ENCODE measurements at regions of chr4 and their contacts with region 1.

Region 1: GRCh38 chr4:76067652-76068286 is 6.7 kb upstream of the ART3 start:
- DNase-seq: peak; percentile 28 to 78 (median 64)
- ATAC-seq: peak; percentile 61
- H3K4me3 ChIP-seq: no peak overlapping the region
- H3K4me3 Mint-ChIP-seq: no peak overlapping the region
- H3K27ac ChIP-seq: no peak overlapping the region
- H3K27ac Mint-ChIP-seq: no peak overlapping the region
- H3K4me1 ChIP-seq: no peaks in the 10 kb centered on the region
- H3K4me1 Mint-ChIP-seq: no peaks in the 10 kb centered on the region
- H3K27me3 ChIP-seq: peaks cover 0 to 2% of the 10 kb centered on the region in 2 experiments
- H3K27me3 Mint-ChIP-seq: no peaks in the 10 kb centered on the region
- CTCF ChIP-seq: peak; percentile 74

Region 2: DNA sequence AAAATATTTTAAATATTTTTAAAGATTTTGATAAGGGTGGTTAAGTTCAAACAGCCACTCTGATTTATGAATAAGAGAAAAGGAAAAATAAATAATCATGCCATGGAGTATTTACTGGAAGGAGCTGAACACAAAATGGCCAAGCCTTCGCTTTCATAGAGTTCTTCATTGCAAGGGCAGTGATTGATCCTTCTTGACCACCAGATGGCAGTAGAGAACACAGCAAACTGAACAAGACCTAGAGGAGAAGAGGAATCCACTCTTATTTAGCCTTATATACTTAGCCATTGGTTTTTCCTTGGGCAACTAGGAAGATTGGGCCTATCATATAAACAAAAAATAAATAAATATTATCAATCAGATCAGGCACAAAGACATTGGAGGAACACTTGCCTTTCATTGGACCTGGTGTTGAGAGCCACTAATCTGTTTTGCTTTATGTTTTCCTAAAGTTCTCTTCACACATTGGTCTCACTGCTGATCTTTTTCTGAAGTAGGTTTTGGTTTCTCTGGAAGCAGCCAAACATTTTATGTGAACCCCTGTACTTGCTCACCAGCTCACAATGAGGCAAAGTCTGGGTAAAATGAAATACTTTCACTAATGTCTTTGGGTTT is 1192.9 kb before region 1 on chr4:
- CTCF ChIA-PET with region 1: no interaction called
- POLR2A ChIA-PET with region 1: no interaction called
- intact Hi-C with region 1: loop called in 1 of 2 experiments (anchors 10 kb)
- DNase-seq: peak in 4 of 9 experiments; percentile 5 to 68 (median 35)
- ATAC-seq: peak; percentile 61
- H3K4me3 ChIP-seq: no peak overlapping the region
- H3K4me3 Mint-ChIP-seq: no peak overlapping the region
- H3K27ac ChIP-seq: no peak overlapping the region
- H3K27ac Mint-ChIP-seq: no peak overlapping the region
- H3K4me1 ChIP-seq: no peaks in the 10 kb centered on the region
- H3K4me1 Mint-ChIP-seq: no peaks in the 10 kb centered on the region
- H3K27me3 ChIP-seq: no peaks in the 10 kb centered on the region
- H3K27me3 Mint-ChIP-seq: peaks cover 12% of the 10 kb centered on the region
- CTCF ChIP-seq: peak; percentile 76

Region 3: DNA sequence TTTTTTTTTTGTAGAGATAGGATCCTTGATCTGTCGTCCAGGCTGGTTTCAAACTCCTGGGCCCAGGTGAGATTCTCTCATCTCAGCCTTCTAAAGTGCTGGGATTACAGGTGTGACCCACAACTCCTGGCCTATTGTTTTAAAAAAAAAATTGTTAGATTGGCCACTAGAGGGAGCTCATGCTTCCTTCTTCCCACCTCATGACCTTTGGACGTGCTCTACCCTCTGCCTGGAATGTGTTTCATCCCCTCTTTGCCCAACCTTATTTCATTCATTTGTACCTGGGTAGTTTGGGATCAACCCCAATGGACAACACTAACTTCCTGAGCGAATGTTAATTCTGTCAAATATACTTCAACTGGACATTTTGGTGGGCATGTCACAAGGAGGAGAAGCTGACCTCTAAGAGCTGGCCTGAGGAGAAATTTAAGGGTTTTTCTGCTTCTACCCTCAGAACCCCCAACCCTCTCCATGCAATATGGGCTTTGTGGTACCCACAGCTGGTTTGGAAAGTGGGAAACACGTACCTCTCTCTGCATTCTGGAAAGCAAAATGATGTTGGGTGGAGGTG is 171.9 kb before region 1 on chr4:
- CTCF ChIA-PET with region 1: interaction called, 16 read pairs
- POLR2A ChIA-PET with region 1: no interaction called
- intact Hi-C with region 1: loop called in 1 of 2 experiments (anchors 1 kb)
- DNase-seq: peak in 2 of 9 experiments; percentile 57 to 68
- ATAC-seq: peak; percentile 49
- H3K4me3 ChIP-seq: no peak overlapping the region
- H3K4me3 Mint-ChIP-seq: no peak overlapping the region
- H3K27ac ChIP-seq: no peak overlapping the region
- H3K27ac Mint-ChIP-seq: no peak overlapping the region
- H3K4me1 ChIP-seq: no peaks in the 10 kb centered on the region
- H3K4me1 Mint-ChIP-seq: no peaks in the 10 kb centered on the region
- H3K27me3 ChIP-seq: no peaks in the 10 kb centered on the region
- H3K27me3 Mint-ChIP-seq: no peaks in the 10 kb centered on the region
- CTCF ChIP-seq: peak; percentile 72

Region 4: GRCh38 chr4:75916091-75916661 is 151.6 kb before region 1 on chr4:
- CTCF ChIA-PET with region 1: interaction called, 6 read pairs
- POLR2A ChIA-PET with region 1: no interaction called
- intact Hi-C with region 1: loop called (anchors 1 kb)
- DNase-seq: peak in 4 of 9 experiments; percentile 8 to 65 (median 37)
- ATAC-seq: peak; percentile 67
- H3K4me3 ChIP-seq: no peak overlapping the region
- H3K4me3 Mint-ChIP-seq: no peak overlapping the region
- H3K27ac ChIP-seq: no peak overlapping the region
- H3K27ac Mint-ChIP-seq: no peak overlapping the region
- H3K4me1 ChIP-seq: no peaks in the 10 kb centered on the region
- H3K4me1 Mint-ChIP-seq: no peaks in the 10 kb centered on the region
- H3K27me3 ChIP-seq: no peaks in the 10 kb centered on the region
- H3K27me3 Mint-ChIP-seq: no peaks in the 10 kb centered on the region
- CTCF ChIP-seq: peak; percentile 72

Region 5: GRCh38 chr4:75995727-75996126 is 72.0 kb before region 1 on chr4:
- CTCF ChIA-PET with region 1: interaction called, 21 read pairs
- POLR2A ChIA-PET with region 1: no interaction called
- intact Hi-C with region 1: loop called (anchors 1 kb)
- DNase-seq: peak in 2 of 9 experiments; percentile 55 to 68
- ATAC-seq: no peak
- H3K4me3 ChIP-seq: no peak overlapping the region
- H3K4me3 Mint-ChIP-seq: no peak overlapping the region
- H3K27ac ChIP-seq: no peak overlapping the region
- H3K27ac Mint-ChIP-seq: no peak overlapping the region
- H3K4me1 ChIP-seq: peaks cover 6% of the 10 kb centered on the region
- H3K4me1 Mint-ChIP-seq: peaks cover 4% of the 10 kb centered on the region
- H3K27me3 ChIP-seq: no peaks in the 10 kb centered on the region
- H3K27me3 Mint-ChIP-seq: peaks cover 1% of the 10 kb centered on the region
- CTCF ChIP-seq: peak; percentile 77

Measured in CD8-positive, alpha-beta T cell (primary cell).